WTC11 (cell line): ENCODE measurements at regions of chr1 and their contacts with region 1.

Region 1: DNA sequence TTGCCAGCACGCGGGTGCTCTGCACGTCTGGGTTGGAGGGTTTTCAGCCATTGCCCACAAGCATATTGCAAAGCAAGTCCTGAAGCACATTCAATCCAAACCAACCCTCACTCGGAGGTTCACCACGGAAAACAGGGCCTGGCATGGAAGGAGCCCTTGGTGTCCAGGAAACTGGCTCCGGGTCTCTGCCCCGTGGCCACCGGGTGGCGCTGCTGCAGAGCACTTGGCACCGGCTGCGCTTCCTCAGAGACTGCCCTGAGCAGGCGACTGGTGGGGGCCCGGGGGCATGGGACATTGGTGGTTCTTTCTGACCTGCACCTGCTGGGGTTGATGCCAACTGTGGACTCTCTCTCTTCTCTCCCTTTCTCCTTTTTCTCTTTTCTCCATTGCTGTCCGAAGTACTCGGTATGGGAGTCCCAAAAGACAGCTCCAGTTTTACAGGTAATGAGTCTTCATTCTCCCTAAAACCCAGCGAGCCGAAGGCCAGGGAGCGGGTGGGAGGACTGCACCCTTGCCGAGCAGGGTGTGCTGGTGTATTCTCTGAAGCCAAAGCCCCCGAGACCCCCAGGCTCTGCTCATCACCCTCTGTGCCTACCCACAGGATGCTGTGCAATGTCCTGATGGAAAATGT is 4.1 kb upstream of the KCNAB2 start:
- DNase-seq: peak; percentile 82
- ATAC-seq: peak; percentile 86
- H3K4me3 Mint-ChIP-seq: no peak overlapping the region
- H3K27ac Mint-ChIP-seq: no peak overlapping the region
- H3K4me1 Mint-ChIP-seq: peaks cover 7% of the 10 kb centered on the region
- H3K27me3 Mint-ChIP-seq: no peaks in the 10 kb centered on the region
- CTCF ChIP-seq: peak; percentile 80

Region 2: GRCh38 chr1:5967351-5968160 is 74.0 kb before region 1 on chr1:
- CTCF ChIA-PET with region 1: no interaction called
- POLR2A ChIA-PET with region 1: no interaction called
- DNase-seq: peak; percentile 4
- ATAC-seq: no peak
- H3K4me3 Mint-ChIP-seq: no peak overlapping the region
- H3K27ac Mint-ChIP-seq: no peak overlapping the region
- H3K4me1 Mint-ChIP-seq: peaks cover 17% of the 10 kb centered on the region
- H3K27me3 Mint-ChIP-seq: no peaks in the 10 kb centered on the region
- CTCF ChIP-seq: no peak

Region 3: DNA sequence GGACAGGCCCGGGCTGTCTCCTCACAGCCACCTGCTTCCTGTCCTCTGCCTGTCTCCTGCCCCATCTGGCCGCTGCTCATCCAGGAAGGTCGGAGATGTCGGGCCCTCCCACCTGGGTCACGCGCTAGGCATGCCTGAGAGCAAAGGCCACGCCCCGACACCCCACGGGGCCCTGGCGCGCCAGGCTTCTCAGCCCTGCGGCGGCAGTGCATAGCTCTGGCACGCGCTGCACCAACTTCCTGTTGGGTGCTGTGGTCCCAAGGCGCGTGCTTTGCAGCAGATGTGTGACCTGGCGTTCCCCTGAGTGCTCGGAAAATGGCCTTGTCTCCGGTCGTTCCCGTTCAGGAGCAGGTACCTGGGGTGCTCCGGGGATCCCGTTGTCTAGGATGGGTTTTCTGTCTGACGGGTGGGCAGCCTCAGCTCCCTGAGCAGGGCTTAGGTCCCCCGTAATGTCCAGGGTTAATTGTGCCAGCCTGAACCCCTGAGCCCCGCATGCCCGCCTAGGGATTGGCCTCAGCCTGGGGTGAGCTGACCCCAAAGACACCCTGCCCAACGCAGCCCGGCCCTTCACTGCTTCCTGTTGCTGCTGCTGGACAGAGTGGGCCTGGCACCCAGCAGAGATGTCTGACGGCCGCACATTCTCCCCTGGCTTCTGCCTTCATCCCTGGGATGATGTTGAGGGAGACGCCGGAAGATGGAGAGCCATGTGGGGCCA is 15.3 kb before region 1 on chr1:
- CTCF ChIA-PET with region 1: interaction called, 10 read pairs
- POLR2A ChIA-PET with region 1: interaction called, 3 read pairs
- DNase-seq: peak; percentile 75
- ATAC-seq: peak; percentile 92
- H3K4me3 Mint-ChIP-seq: no peak overlapping the region
- H3K27ac Mint-ChIP-seq: no peak overlapping the region
- H3K4me1 Mint-ChIP-seq: peaks cover 4% of the 10 kb centered on the region; the same call in 1 of the 2 replicates
- H3K27me3 Mint-ChIP-seq: no peaks in the 10 kb centered on the region; the same call in 1 of the 2 replicates
- CTCF ChIP-seq: no peak